H1 (cell line): ENCODE measurements at regions of chr1 and their contacts with region 1.

Region 1: DNA sequence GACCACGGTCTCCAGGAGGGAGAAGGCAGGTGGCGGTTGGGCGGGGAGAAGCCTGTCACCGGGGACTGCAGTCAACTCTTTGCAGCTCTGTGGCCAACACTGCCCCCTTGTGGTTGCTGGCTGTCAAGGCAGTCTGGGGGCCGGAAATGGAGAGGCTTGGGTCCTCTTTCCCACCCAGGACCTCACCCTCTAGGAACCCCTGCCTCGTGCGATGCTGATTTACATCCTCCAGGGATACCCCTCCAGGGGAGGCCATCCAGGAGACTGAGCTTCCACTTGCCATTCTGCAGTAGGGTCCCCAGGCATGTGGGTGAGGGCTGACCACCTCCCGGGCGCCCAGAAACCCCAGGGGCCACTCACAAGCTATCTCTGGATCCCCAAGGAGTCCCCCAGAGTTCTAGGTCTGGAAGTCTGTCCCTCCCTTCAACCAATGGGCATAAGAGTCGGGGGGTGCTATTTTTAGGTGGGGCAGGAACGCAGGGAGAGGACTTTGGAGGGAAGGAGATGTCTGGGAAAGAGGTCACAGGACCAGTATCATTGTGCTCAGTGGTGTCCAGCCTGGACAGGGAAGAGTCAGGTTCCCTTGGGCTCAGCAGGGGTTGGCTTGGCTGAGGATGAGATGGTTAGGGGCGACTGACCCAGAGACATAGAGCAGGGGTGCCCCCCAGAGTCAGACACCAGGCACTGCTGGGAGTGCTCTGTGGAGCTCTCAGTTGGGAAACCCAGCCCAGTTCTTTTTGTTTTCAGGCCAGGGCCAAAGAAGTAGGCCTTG is 7.1 kb upstream of the GPR61 start:
- DNase-seq: peak in 1 of 2 experiments; percentile 97
- H3K4me3 ChIP-seq: peak overlapping the region in 2 of 4 experiments; percentile 10 to 40; a peak in 1 of 8 replicates
- H3K27ac ChIP-seq: no peak overlapping the region
- H3K4me1 ChIP-seq: peaks cover 0 to 3% (median 1%) of the 10 kb centered on the region in 4 experiments; a peak in 4 of 7 replicates
- H3K27me3 ChIP-seq: no peaks in the 10 kb centered on the region
- CTCF ChIP-seq: peak; percentile 92 to 98 (median 96)
- EP300 ChIP-seq: no peak
- POLR2A ChIP-seq: no peak
- RAD21 ChIP-seq: peak; percentile 93

Region 2: DNA sequence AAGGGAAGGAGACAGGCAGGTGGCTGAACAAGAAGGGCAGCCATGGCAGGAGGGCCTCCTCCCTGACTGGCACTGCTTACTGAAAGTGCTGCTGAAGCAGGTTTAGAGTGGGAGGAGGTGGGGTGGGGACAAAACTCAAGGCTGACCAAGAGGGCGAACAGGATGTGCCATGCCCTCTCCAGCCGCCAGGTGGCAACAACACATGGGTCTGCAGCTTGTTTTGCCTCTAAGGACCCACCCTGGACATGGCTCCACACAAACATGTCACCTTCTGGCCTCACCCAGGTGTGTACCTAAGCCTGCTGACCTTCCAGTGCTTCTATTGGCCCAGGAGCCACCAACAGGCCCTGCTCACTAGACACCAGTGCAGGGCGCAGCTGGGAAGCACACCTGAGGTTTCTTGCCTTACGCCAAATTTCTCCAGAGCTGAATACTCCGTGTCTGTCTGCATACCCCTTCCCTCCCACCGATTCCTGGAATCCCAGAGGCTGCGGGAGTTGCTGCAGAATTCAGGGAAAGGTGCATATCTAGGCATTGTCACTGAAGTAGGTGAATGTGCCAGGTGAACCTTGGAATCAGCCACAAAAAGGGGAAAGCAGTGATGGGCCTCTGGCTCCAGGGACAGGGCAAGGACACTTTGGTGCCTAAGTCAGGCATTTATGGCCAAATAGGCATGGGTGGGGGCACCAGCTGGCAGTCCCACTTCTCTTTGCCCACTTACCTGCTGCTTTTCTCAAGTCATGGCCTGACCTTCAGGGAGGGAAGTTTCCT is 254.9 kb before region 1 on chr1:
- CTCF ChIA-PET with region 1: interaction called, 31 read pairs
- POLR2A ChIA-PET with region 1: interaction called, 3 read pairs
- DNase-seq: peak; percentile 81 to 94
- H3K4me3 ChIP-seq: no peak overlapping the region
- H3K27ac ChIP-seq: 0 out of 2 replicates have a peak overlapping the region, but pooled peaks have one; percentile 20
- H3K4me1 ChIP-seq: peaks cover 4 to 19% (median 10%) of the 10 kb centered on the region in 4 experiments; a peak in 6 of 7 replicates
- H3K27me3 ChIP-seq: no peaks in the 10 kb centered on the region
- CTCF ChIP-seq: peak; percentile 91 to 100 (median 99)
- EP300 ChIP-seq: no peak
- POLR2A ChIP-seq: no peak; a peak in 1 of 3 replicates
- RAD21 ChIP-seq: peak; percentile 88 to 89

Region 3: DNA sequence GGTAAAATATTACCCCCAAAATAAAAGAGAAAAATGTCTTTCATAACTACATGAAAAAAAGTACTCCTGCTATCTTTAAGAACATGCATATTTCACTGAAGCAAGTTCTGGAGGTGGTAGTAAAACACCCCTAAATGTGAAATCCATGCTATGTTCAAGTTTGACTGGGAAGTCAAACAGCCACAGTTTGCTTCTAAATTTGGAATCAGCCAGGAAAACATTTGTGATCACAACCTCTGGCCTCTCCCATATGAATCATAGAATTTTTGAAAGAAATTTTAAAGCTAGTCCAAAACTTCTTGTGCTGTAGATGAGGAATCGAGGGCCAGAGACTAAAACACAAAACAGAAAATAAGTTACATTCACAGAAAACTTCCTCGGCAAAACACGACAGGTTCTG is 141.4 kb before region 1 on chr1:
- CTCF ChIA-PET with region 1: no interaction called
- POLR2A ChIA-PET with region 1: no interaction called
- DNase-seq: no peak
- H3K4me3 ChIP-seq: no peak overlapping the region
- H3K27ac ChIP-seq: no peak overlapping the region
- H3K4me1 ChIP-seq: peaks cover 0 to 4% (median 1%) of the 10 kb centered on the region in 4 experiments; a peak in 6 of 7 replicates
- H3K27me3 ChIP-seq: no peaks in the 10 kb centered on the region
- CTCF ChIP-seq: no peak
- EP300 ChIP-seq: no peak
- POLR2A ChIP-seq: no peak
- RAD21 ChIP-seq: no peak

Region 4: GRCh38 chr1:109426278-109427170 is 106.0 kb before region 1 on chr1 and contains the start of gene PSMA5:
- CTCF ChIA-PET with region 1: interaction called, 34 read pairs
- POLR2A ChIA-PET with region 1: interaction called, 3 read pairs
- DNase-seq: peak; percentile 88 to 94
- H3K4me3 ChIP-seq: peak within 1 kb of the TSS; percentile 80 to 99 (median 95)
- H3K27ac ChIP-seq: peak within 1 kb of the TSS; percentile 78
- H3K4me1 ChIP-seq: no peaks in the 10 kb centered on the region; a peak in 1 of 7 replicates
- H3K27me3 ChIP-seq: no peaks in the 10 kb centered on the region
- CTCF ChIP-seq: no peak
- EP300 ChIP-seq: no peak
- POLR2A ChIP-seq: peak; percentile 88 to 98
- RAD21 ChIP-seq: no peak
- total RNA-seq, gene PSMA5: 147 and 166 TPM in 2 replicates

Region 5: DNA sequence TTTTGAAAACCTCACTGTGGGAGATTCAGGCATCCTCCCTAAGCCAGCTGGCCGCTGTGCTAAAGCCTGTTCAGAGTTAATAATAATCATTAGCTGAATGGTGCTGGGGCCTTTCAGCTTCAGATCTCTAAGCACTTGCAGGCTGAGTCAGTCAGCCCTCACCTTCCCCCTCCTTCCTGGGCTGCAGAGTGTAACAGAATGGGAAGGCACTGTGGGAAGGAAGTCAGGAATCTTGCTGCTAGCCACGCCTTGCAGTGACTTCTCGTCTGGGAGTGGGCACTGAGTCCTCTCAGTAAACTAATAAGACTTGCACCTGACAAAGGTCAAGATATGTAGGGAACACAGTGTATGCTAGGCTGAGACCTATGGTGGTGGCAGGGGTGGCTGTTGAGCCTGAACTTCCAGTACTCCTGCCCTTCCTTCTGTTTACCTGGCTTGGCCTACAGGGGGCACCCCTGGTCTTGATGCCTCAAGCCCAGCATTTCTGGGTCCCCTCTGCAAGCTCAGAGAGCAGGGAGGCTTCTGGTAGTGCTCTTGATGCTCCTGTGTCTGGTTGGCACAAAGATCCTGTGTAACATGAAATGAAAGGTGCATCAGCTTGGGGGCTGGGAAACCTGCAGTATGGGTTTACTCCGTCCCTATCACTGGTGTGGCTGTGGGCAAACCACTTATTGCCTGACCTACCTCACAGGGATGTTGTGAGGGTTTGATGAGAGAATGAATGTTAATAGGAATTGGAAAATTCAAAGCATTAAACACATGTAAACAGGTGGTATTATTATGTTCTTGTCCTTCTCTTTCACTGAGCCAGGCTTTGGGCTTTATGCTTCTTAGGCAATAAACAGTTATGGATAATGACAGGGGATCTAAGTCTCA is 32.7 kb before region 1 on chr1:
- CTCF ChIA-PET with region 1: interaction called, 1,755 read pairs
- POLR2A ChIA-PET with region 1: interaction called, 20 read pairs
- DNase-seq: peak in 1 of 2 experiments; percentile 90
- H3K4me3 ChIP-seq: no peak overlapping the region
- H3K27ac ChIP-seq: no peak overlapping the region
- H3K4me1 ChIP-seq: peaks cover 0 to 11% (median 5%) of the 10 kb centered on the region in 4 experiments; a peak in 5 of 7 replicates
- H3K27me3 ChIP-seq: no peaks in the 10 kb centered on the region
- CTCF ChIP-seq: peak; percentile 82 to 87 (median 85)
- EP300 ChIP-seq: no peak
- POLR2A ChIP-seq: no peak
- RAD21 ChIP-seq: peak; percentile 58 to 67

Region 6: DNA sequence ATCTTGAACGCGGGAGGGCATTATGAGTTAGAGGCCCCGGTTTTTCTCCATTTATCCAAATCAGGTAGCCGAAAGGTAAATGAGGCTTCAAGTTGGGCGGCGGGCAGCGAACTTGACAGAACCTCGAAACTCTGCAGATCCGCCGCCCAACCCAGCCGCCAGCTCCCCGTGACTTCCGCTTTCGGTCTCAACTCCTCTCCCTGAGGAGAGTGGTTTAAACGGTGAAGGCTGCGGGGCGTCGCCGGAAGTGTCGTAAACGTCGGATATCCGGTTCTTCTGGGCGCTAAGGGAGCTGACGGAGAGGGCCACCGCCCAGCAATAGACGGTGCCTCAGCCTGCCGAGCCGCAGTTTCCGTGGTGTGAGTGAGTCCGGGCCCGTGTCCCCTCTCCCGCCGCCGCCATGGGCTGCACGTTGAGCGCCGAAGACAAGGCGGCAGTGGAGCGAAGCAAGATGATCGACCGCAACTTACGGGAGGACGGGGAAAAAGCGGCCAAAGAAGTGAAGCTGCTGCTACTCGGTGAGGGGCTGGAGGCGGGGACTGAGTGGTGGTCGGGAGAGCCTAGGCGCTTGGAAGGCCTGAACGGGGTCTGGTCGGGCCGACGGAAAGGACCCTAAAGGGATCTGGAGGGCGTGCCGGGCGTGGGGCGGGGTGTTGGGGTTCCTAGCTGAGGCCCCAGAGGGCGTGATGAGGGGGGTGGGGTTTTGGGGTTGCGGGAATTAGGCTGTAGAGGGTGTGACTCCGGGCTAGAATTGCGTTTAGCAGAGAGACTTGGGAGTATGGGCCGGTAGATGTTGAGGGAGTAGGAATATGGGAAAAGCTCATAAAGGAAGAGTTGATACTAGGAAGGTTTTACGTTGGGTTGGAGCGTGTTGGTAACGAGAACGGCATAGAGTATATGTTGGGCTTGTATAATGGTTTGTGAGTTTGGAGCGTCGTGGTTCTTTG is 16.0 kb after region 1 on chr1 and contains the start of gene GNAI3:
- CTCF ChIA-PET with region 1: interaction called, 118 read pairs
- POLR2A ChIA-PET with region 1: interaction called, 10 read pairs
- DNase-seq: peak; percentile 82 to 95
- H3K4me3 ChIP-seq: peak within 1 kb of the TSS; percentile 81 to 91 (median 90)
- H3K27ac ChIP-seq: peak within 1 kb of the TSS; percentile 83
- H3K4me1 ChIP-seq: peaks cover 0 to 8% (median under 1%) of the 10 kb centered on the region in 4 experiments; a peak in 5 of 7 replicates
- H3K27me3 ChIP-seq: no peaks in the 10 kb centered on the region
- CTCF ChIP-seq: peak in 1 of 3 experiments; percentile 1; a peak in 1 of 4 replicates
- EP300 ChIP-seq: no peak
- POLR2A ChIP-seq: peak; percentile 62 to 91
- RAD21 ChIP-seq: peak in 1 of 2 experiments; percentile 4; a peak in 1 of 4 replicates
- total RNA-seq, gene GNAI3: 9.2 and 9.8 TPM in 2 replicates

Region 7: DNA sequence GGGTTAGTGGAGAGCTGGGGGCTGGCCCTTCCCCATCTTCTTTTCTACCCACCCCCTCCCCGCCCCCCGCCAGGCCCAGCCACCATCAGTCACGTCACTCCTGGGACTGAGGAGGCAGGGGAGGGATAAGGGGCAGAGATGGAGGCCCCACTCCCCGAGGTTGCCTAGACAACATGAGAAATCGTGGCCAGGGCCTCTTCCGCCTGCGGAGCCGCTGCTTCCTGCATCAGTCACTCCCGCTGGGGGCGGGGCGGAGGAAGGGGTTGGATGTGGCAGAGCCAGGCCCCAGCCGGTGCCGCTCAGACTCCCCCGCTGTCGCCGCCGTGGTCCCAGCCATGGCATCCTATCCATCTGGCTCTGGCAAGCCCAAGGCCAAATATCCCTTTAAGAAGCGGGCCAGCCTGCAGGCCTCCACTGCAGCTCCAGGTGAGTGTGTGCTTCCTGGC is 88.3 kb after region 1 on chr1:
- CTCF ChIA-PET with region 1: interaction called, 16 read pairs
- POLR2A ChIA-PET with region 1: no interaction called
- DNase-seq: peak in 1 of 2 experiments; percentile 89
- H3K4me3 ChIP-seq: peak overlapping the region; percentile 69 to 85 (median 78)
- H3K27ac ChIP-seq: no peak overlapping the region
- H3K4me1 ChIP-seq: peaks cover 4 to 25% (median 12%) of the 10 kb centered on the region in 4 experiments
- H3K27me3 ChIP-seq: no peaks in the 10 kb centered on the region
- CTCF ChIP-seq: no peak
- EP300 ChIP-seq: no peak
- POLR2A ChIP-seq: no peak
- RAD21 ChIP-seq: no peak